PC-9 (cell line): ENCODE measurements at regions of chr11 and their contacts with region 1.

Region 1: DNA sequence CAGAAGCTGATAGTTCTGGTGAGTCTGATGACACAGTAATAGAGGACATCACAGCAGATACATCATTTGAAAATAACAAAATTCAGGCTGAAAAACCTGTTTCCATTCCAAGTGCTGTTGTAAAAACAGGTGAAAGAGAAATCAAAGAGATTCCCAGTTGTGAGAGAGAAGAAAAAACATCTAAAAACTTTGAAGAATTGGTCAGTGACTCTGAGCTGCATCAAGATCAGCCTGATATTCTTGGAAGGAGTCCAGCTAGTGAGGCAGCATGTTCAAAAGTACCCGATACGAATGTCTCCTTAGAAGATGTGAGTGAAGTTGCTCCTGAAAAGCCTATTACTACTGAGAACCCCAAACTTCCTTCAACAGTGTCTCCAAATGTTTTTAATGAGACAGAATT is 38.7 kb downstream of the RTN3 start:
- DNase-seq: no peak
- H3K4me3 ChIP-seq: no peak overlapping the region
- H3K27ac ChIP-seq: no peak overlapping the region
- H3K4me1 ChIP-seq: 0 out of 2 replicates have a peak, but pooled peaks cover 4% of the 10 kb centered on the region
- H3K27me3 ChIP-seq: no peaks in the 10 kb centered on the region
- CTCF ChIP-seq: no peak

Region 2: GRCh38 chr11:63652671-63653070 is 67.3 kb before region 1 on chr11:
- CTCF ChIA-PET with region 1: no interaction called
- POLR2A ChIA-PET with region 1: interaction called, 18 read pairs
- intact Hi-C with region 1: no loop called
- DNase-seq: peak in 1 of 2 experiments; percentile 3
- H3K4me3 ChIP-seq: no peak overlapping the region
- H3K27ac ChIP-seq: no peak overlapping the region
- H3K4me1 ChIP-seq: no peaks in the 10 kb centered on the region
- H3K27me3 ChIP-seq: no peaks in the 10 kb centered on the region
- CTCF ChIP-seq: no peak

Region 3: DNA sequence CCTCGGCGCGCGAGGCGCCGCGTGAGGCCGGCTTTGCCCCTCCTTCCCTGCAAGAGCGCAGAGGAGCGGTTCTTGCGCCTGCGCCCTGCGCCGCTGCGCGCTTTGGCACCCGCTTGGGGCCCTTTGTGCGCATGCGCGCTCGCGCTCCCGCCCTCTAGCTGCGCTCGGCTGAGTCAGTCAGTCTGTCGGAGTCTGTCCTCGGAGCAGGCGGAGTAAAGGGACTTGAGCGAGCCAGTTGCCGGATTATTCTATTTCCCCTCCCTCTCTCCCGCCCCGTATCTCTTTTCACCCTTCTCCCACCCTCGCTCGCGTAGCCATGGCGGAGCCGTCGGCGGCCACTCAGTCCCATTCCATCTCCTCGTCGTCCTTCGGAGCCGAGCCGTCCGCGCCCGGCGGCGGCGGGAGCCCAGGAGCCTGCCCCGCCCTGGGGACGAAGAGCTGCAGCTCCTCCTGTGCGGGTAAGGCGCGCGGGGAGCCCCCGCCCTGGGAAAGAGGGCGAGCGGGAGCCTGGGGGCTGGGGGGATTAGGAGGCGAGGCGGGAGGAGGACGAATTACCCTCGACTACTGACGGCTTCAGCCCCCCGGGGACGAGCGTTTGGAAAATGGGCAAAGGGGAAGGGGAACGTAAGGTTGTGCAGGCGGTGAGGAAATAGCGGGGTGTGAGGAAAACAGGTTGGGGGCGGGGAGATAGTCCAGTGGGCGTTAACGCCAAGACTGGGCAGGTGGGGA is 38.5 kb before region 1 on chr11 and contains the start of gene RTN3:
- CTCF ChIA-PET with region 1: interaction called, 13 read pairs
- POLR2A ChIA-PET with region 1: no interaction called
- intact Hi-C with region 1: no loop called
- DNase-seq: peak; percentile 95 to 100
- H3K4me3 ChIP-seq: peak within 1 kb of the TSS; percentile 93
- H3K27ac ChIP-seq: peak within 1 kb of the TSS; percentile 77
- H3K4me1 ChIP-seq: peaks cover 22% of the 10 kb centered on the region
- H3K27me3 ChIP-seq: no peaks in the 10 kb centered on the region
- CTCF ChIP-seq: no peak
- total RNA-seq, gene RTN3: 220 and 279 TPM in 2 replicates